ENCODE measurements at regions of chr5 and their contacts with region 1.

Region 1: GRCh38 chr5:52915176-52915875 is 73.8 kb upstream of the ITGA2 start:
- DNase-seq: no peak
- ATAC-seq: peak; percentile 79 to 96 (median 89)
- H3K4me3 ChIP-seq: peak overlapping the region; percentile 47
- H3K27ac ChIP-seq: no peak overlapping the region
- H3K4me1 ChIP-seq: no peaks in the 10 kb centered on the region
- H3K27me3 ChIP-seq: no peaks in the 10 kb centered on the region
- CTCF ChIP-seq: peak; percentile 79

Region 2: DNA sequence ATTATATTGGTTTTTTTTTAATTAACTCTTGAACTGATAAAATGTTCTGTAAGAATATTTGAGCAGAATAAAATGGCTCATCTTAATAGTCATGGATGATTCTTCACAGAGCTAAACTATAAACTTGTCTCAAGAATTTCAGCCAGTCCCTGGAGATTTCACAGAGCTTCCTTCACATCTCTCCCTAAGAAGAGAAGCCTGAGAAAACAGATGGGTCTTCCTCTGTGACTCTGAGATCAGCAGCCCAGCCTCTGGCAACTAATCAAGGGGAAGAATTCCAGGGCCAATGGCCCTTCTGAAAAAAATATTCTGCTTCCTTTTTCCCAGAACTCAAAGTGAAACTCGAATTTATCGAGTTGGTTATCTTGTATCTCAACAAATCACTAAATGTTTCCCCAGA is 249.8 kb before region 1 on chr5:
- intact Hi-C with region 1: loop called in 1 of 2 experiments (anchors 10 kb)
- DNase-seq: no peak
- ATAC-seq: no peak
- H3K4me3 ChIP-seq: peak overlapping the region; percentile 8
- H3K27ac ChIP-seq: no peak overlapping the region
- H3K4me1 ChIP-seq: no peaks in the 10 kb centered on the region
- H3K27me3 ChIP-seq: peaks cover 0 to 2% (median 0%) of the 10 kb centered on the region in 3 donors
- CTCF ChIP-seq: no peak

Region 3: GRCh38 chr5:52787600-52788504 is 127.5 kb before region 1 on chr5 and contains the starts of genes ITGA1 and PELO:
- intact Hi-C with region 1: loop called (anchors 1 to 5 kb)
- DNase-seq: peak; percentile 79 to 82
- ATAC-seq: peak; percentile 71 to 91 (median 85)
- H3K4me3 ChIP-seq: peak within 1 kb of the TSS; percentile 79
- H3K27ac ChIP-seq: peak within 1 kb of the TSS; percentile 74
- H3K4me1 ChIP-seq: peaks cover 6% of the 10 kb centered on the region
- H3K27me3 ChIP-seq: no peaks in the 10 kb centered on the region
- CTCF ChIP-seq: peak; percentile 35
- total RNA-seq, gene ITGA1: 13.0 to 29.3 (median 17.4) TPM
- total RNA-seq, gene PELO: 24.8 to 30.1 (median 25.3) TPM

Region 4: DNA sequence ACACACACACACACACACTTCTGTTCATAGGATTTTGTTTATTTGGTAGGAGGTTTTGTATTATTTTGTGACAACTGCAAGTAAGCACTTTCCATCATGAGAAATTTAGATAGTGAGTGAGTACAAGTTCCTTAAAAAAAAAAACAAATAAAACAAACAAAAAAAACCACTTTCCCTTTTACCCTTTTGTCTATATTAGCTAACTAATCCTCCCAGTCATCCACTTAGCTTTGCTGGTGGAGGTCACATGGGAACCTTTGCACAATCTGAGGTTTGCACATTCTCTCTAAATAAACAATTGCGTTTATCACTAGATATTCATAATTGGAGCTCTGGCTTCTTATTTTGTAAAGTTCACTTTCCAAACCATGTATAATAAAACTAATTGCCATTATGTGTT is 120.8 kb before region 1 on chr5:
- intact Hi-C with region 1: loop called in 1 of 2 experiments (anchors 5 kb)
- DNase-seq: no peak
- ATAC-seq: no peak
- H3K4me3 ChIP-seq: no peak overlapping the region
- H3K27ac ChIP-seq: no peak overlapping the region
- H3K4me1 ChIP-seq: peaks cover 8% of the 10 kb centered on the region
- H3K27me3 ChIP-seq: no peaks in the 10 kb centered on the region
- CTCF ChIP-seq: no peak